ENCODE measurements at regions of chr19 and their contacts with region 1.

Region 1: GRCh38 chr19:6663236-6664201 is 6.4 kb downstream of the TNFSF14 start:
- DNase-seq: peak; percentile 75
- H3K4me3 Mint-ChIP-seq: no peak overlapping the region
- H3K27ac Mint-ChIP-seq: no peak overlapping the region
- H3K4me1 Mint-ChIP-seq: peaks cover 26% of the 10 kb centered on the region
- H3K27me3 Mint-ChIP-seq: no peaks in the 10 kb centered on the region

Region 2: DNA sequence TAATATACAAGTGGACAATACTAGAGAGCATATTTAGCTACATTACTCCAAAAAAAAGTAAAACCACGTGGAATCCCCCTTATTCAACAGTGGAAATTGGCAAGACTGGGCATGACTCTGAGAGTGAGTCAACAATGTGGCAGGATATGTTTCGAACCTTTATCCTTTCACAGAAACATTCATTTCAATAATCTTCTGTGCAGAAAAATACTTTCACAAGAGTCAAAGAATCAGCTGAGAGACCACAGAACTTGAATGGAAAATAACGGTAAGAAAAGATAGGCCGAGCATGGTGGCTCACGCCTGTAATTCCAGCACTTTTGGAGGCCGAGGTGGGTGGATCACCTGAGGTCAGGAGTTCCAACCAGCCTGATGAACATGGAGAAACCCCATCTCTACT is 47.5 kb before region 1 on chr19:
- CTCF ChIA-PET with region 1: no interaction called
- POLR2A ChIA-PET with region 1: interaction called, 5 read pairs
- intact Hi-C with region 1: loop called (anchors 1 kb)
- DNase-seq: peak; percentile 64
- H3K4me3 Mint-ChIP-seq: no peak overlapping the region
- H3K27ac Mint-ChIP-seq: peak overlapping the region; percentile 59
- H3K4me1 Mint-ChIP-seq: peaks cover 32% of the 10 kb centered on the region
- H3K27me3 Mint-ChIP-seq: peaks cover 28% of the 10 kb centered on the region

Region 3: DNA sequence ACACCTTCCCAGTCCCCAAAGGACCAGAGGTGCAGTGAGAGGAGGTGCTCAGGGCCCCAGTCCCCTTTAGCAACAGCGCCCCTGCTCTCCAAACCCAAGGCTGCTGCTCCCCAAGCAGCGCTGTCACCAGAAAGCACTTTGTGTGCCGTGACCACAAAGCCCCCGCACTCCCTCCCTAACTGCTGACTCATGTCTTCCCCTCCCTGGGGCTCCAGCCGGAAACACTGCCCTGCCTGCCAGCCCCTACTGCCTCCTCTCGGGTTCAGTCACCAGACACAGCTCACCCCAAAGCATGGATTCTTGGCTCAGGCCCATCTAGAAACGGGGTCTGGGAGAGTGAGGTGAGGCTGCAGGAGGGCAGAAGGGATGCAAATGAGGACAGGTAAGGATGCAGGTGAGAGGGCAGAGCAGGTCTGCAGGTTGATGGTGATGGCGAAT is 11.4 kb after region 1 on chr19:
- CTCF ChIA-PET with region 1: interaction called, 6 read pairs
- POLR2A ChIA-PET with region 1: interaction called, 25 read pairs
- intact Hi-C with region 1: loop called (anchors 1 kb)
- DNase-seq: peak; percentile 98
- H3K4me3 Mint-ChIP-seq: peak overlapping the region; percentile 62
- H3K27ac Mint-ChIP-seq: peak overlapping the region; percentile 79
- H3K4me1 Mint-ChIP-seq: peaks cover 69% of the 10 kb centered on the region
- H3K27me3 Mint-ChIP-seq: peaks cover 3% of the 10 kb centered on the region

Region 4: DNA sequence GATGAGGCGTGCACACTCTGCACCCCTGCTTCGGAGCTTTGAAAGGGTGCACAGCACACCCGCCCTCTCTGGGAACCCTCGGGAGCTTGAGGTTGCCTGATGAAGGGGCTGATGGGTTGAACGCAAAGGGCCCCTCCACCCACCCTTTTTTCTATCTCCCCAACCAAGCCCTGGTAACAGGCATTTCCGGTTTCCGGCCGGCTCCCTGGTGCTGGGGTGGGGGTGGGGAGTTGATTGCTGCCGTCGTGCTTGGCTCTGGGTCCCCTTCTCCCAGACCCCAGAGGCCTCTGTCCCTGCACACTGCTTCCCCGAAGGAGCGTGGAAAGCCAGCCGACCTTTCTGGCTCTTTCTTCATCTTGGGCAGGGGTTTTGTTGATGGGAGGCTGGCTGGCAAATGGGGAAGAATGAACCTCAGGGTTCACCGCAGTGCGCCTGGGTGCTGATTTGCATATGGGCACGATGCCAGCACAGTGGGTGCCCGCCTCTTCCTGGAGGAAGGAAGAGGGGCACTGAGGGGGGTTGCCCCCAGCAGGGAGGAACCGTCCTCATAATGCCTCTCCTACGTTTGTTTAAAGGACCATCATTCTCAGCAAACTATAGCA is 138.1 kb after region 1 on chr19:
- CTCF ChIA-PET with region 1: no interaction called
- POLR2A ChIA-PET with region 1: no interaction called
- intact Hi-C with region 1: loop called (anchors 5 kb)
- DNase-seq: peak; percentile 89
- H3K4me3 Mint-ChIP-seq: peak overlapping the region; percentile 75
- H3K27ac Mint-ChIP-seq: peak overlapping the region; percentile 94
- H3K4me1 Mint-ChIP-seq: peaks cover 53% of the 10 kb centered on the region
- H3K27me3 Mint-ChIP-seq: no peaks in the 10 kb centered on the region

Measured in activated CD4-positive, alpha-beta memory T cell treated with anti-CD3 and anti-CD28 coated beads for 36 hours (primary cell).